ENCODE measurements at regions of chr12 and their contacts with region 1.

Region 1: GRCh38 chr12:79373896-79374499 is 316.8 kb downstream of the PAWR start:
- DNase-seq: no peak
- H3K4me3 Mint-ChIP-seq: no peak overlapping the region
- H3K27ac Mint-ChIP-seq: no peak overlapping the region
- H3K4me1 Mint-ChIP-seq: no peaks in the 10 kb centered on the region
- H3K27me3 Mint-ChIP-seq: no peaks in the 10 kb centered on the region

Region 2: GRCh38 chr12:78146365-78146772 is 1227.6 kb before region 1 on chr12:
- intact Hi-C with region 1: loop called (anchors 10 kb)
- DNase-seq: no peak
- H3K4me3 Mint-ChIP-seq: no peak overlapping the region
- H3K27ac Mint-ChIP-seq: no peak overlapping the region
- H3K4me1 Mint-ChIP-seq: no peaks in the 10 kb centered on the region
- H3K27me3 Mint-ChIP-seq: no peaks in the 10 kb centered on the region

Measured in activated T-helper 2 cell treated with anti-CD3 and anti-CD28 coated beads, Interferon-gamma antibody, Interleukin-2, Interleukin-4, amounts not matched to agents 10 μg/mL and 5 μg/mL and 100 μg/mL, durations not matched to agents 14 hours and 24 hours and 36 hours (primary cell).